ENCODE measurements at regions of chr7 and their contacts with region 1.

Region 1: DNA sequence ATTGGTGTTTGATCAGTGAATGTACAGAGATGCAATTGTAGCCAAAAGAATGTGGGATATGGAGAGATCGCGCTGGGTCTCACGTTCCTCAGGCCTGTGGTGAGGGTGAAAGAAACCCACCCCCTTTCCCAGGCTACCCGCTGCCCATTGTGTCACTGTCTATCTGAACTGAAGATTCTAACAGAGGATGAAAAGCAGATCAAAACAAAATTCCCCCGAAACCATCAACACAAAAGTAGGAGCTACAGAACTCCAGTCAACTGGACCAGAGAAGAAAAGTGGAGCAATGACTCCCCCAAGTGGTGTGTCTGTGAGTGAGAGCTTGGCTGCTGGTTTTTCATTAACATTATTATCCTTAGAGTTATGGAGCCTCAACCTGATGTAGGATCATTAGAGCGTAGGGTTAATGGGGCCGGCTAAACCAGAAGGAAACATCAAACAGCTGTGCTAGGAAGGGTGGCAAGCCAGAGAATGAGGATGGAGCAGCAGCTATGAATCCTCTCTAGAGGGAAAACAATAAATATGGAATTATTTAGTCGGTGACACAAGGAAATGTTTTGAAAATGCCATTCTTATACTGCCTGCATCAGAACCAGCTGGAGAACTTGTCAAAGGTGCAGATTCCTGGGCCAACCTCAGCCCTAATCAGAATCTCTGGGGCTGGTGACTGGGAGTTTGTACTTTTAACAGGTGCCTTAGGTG is 38.3 kb downstream of the AKR1B1 start:
- DNase-seq: peak; percentile 77
- H3K4me3 Mint-ChIP-seq: peak overlapping the region; percentile 29
- H3K27ac Mint-ChIP-seq: peak overlapping the region; percentile 2
- H3K4me1 Mint-ChIP-seq: peaks cover 34% of the 10 kb centered on the region
- H3K27me3 Mint-ChIP-seq: no peaks in the 10 kb centered on the region
- CTCF ChIP-seq: peak; percentile 58

Region 2: DNA sequence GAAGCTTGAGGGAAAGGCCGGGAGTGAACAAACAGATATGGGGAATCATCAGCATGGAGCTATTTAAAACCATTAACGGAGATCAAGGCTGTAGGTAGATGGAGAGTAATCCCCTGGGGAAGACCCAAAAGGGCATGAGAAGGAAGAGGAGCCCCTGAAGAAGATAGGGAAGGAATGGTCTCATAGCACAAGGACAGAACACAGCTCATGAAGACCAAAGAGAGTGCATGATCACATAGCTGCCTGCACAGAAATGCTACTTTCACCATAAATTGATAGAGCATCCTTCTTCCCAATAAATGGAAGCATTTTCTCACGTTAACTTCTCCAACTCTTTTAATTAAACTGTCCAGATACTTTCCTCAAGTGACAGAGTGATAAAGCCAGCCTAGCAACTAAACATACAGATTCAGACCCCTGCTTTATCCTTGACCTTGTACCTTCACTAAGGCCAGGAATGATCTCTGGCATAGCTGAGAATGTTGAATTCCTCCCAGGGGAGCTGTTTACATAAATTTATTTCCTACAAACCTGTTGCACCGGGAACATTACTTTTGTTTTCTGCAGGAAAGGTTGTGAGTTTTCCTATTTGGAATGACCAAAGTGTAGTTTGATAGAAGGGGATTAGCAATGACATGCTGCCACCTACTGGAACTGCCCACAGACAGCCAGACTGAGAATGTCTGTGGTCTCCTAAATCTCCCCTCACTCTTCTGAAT is 404.2 kb before region 1 on chr7:
- CTCF ChIA-PET with region 1: no interaction called
- intact Hi-C with region 1: loop called (anchors 10 kb)
- DNase-seq: peak; percentile 42
- H3K4me3 Mint-ChIP-seq: no peak overlapping the region
- H3K27ac Mint-ChIP-seq: no peak overlapping the region
- H3K4me1 Mint-ChIP-seq: peaks cover 8% of the 10 kb centered on the region
- H3K27me3 Mint-ChIP-seq: no peaks in the 10 kb centered on the region
- CTCF ChIP-seq: peak; percentile 51

Region 3: DNA sequence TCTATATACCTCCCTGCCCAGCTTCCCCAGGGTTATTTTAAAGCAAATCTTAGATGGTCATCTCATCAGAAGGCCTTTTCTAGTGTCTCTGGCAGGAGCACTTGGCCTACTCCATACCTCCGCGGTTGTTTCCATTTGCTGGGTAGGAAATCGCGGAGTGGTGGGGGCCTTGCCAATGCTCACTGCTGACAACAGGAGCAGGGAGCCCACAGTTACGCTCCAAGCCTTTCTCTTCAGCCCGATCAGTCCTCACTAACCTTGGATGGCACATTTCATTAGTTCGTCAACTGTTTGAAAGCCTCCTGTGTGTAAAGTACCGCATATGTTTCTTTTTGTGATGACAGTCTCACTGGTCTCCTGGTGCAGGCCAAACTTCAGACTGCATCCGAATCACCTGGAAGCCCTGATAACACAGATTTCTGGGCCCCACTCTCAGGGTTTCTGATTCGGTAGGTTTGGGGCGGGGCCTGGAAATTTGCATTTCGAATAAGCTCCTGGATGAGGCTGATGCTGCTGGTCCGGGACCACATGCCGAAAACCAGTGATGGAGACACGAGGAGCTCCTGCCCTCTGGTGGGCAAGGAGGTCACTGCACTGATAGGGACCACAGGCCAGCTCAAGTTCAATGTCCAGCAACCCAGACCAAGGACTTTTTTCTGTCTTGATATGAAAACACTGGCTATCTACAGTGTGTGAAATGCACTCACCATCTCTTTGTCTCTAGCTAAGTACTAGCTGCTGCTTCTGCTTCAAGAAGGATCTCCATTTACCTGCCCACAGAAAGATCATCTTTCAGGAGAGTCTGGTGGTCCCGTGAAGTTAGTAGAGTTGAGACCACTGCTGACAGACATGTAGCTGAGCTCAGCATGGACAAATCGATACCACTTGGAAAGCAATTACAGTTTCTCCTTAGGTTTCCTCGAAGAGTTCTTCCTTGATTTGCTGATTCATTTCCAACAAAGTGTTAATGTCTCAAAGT is 279.4 kb before region 1 on chr7:
- CTCF ChIA-PET with region 1: interaction called, 25 read pairs
- intact Hi-C with region 1: loop called (anchors 2 kb)
- DNase-seq: peak; percentile 76
- H3K4me3 Mint-ChIP-seq: no peak overlapping the region
- H3K27ac Mint-ChIP-seq: no peak overlapping the region
- H3K4me1 Mint-ChIP-seq: no peaks in the 10 kb centered on the region
- H3K27me3 Mint-ChIP-seq: no peaks in the 10 kb centered on the region
- CTCF ChIP-seq: peak; percentile 60

Region 4: GRCh38 chr7:134316539-134317344 is 103.8 kb before region 1 on chr7 and contains the start of gene SLC35B4:
- CTCF ChIA-PET with region 1: interaction called, 10 read pairs
- intact Hi-C with region 1: loop called (anchors 10 kb)
- DNase-seq: peak; percentile 96
- H3K4me3 Mint-ChIP-seq: peak within 1 kb of the TSS; percentile 84
- H3K27ac Mint-ChIP-seq: peak within 1 kb of the TSS; percentile 52
- H3K4me1 Mint-ChIP-seq: peaks cover 14% of the 10 kb centered on the region
- H3K27me3 Mint-ChIP-seq: peaks cover 18% of the 10 kb centered on the region
- CTCF ChIP-seq: no peak
- total RNA-seq, gene SLC35B4: 13.3 and 14.5 TPM in 2 replicates

Region 5: GRCh38 chr7:134355927-134356326 is 64.6 kb before region 1 on chr7:
- CTCF ChIA-PET with region 1: interaction called, 12 read pairs
- intact Hi-C with region 1: no loop called
- DNase-seq: peak; percentile 44
- H3K4me3 Mint-ChIP-seq: peak overlapping the region; percentile 35
- H3K27ac Mint-ChIP-seq: peak overlapping the region; percentile 93
- H3K4me1 Mint-ChIP-seq: peaks cover 36% of the 10 kb centered on the region
- H3K27me3 Mint-ChIP-seq: no peaks in the 10 kb centered on the region
- CTCF ChIP-seq: no peak

Region 6: DNA sequence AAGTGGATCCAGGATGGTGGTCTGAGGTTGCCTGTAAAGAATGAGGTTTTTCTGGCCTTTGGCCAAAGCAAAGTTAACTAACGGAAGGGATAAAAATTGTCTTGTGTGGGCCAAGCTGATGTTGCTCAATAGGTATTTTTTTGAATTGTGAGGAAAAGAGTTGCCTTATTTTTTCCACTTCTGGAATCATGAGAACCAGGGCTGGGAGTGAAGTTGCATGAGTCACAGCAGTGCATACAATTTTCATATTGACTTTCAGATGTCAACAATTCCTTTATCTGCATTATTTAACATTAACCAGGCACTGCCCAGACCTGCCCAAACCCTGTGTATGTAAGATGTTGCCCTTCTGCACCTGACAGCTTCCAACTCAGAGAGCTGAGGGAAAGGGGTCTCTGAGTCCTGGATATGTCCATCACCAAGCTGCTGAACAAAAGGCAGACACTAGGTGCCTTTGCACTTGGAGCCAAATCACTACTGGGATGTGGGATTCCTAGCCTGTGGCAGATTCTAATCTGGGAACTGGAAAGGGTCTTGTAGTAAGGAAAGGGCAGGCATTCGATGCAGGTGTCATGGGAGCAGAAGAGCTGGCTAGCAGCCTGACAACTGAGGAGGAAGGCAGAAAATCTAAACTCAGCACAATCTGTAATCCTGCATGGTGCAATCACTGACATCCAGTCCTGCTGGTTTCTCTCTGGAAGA is 51.6 kb before region 1 on chr7:
- CTCF ChIA-PET with region 1: interaction called, 6 read pairs
- intact Hi-C with region 1: loop called (anchors 1 kb)
- DNase-seq: peak; percentile 65
- H3K4me3 Mint-ChIP-seq: peak overlapping the region; percentile 57
- H3K27ac Mint-ChIP-seq: peak overlapping the region; percentile 90
- H3K4me1 Mint-ChIP-seq: peaks cover 66% of the 10 kb centered on the region
- H3K27me3 Mint-ChIP-seq: no peaks in the 10 kb centered on the region
- CTCF ChIP-seq: no peak

Measured in Calu3 (cell line).